Mammary epithelial cell (primary cell): ENCODE measurements at regions of chr11 and their contacts with region 1.

Region 1: DNA sequence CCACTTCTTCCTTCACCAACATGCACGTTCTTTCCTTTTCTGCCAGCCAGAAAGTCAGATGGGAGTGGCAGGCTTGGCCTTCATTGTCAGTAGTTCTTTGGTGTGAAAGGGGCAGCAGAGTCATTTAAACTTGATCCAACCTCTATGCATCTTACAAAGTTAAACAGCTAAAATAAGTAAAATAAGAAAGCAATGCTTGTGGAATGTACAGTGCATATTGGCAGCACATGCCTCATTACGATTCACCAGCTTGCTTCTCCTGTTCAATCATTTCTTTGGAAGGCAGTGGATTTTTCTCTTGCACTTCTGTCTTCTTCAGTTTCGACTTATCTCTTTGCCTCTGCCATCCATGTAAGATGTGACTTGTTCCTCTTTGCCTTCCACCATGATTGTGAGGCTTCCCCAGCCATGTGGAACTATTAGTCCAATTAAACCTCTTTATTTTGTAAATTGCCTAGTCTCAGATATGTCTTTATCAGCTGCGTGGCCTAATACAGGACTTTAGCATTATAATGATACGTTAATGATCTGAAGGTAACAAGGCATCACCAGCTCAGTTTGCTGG is 14.8 kb downstream of the LGALS12 start:
- DNase-seq: no peak
- H3K4me3 ChIP-seq: no peak overlapping the region
- H3K27ac ChIP-seq: no peak overlapping the region
- H3K4me1 ChIP-seq: no peaks in the 10 kb centered on the region
- H3K27me3 ChIP-seq: no peaks in the 10 kb centered on the region
- CTCF ChIP-seq: no peak

Region 2: GRCh38 chr11:63621931-63622782 is 101.5 kb after region 1 on chr11:
- CTCF ChIA-PET with region 1: no interaction called
- dilution Hi-C with region 1: loop called (anchors 5 kb)
- in situ Hi-C with region 1: no loop called
- intact Hi-C with region 1: no loop called
- DNase-seq: peak; percentile 61
- H3K4me3 ChIP-seq: no peak overlapping the region
- H3K27ac ChIP-seq: no peak overlapping the region
- H3K4me1 ChIP-seq: no peaks in the 10 kb centered on the region
- H3K27me3 ChIP-seq: no peaks in the 10 kb centered on the region
- CTCF ChIP-seq: no peak